ENCODE measurements at regions of chr7 and their contacts with region 1.

Region 1: DNA sequence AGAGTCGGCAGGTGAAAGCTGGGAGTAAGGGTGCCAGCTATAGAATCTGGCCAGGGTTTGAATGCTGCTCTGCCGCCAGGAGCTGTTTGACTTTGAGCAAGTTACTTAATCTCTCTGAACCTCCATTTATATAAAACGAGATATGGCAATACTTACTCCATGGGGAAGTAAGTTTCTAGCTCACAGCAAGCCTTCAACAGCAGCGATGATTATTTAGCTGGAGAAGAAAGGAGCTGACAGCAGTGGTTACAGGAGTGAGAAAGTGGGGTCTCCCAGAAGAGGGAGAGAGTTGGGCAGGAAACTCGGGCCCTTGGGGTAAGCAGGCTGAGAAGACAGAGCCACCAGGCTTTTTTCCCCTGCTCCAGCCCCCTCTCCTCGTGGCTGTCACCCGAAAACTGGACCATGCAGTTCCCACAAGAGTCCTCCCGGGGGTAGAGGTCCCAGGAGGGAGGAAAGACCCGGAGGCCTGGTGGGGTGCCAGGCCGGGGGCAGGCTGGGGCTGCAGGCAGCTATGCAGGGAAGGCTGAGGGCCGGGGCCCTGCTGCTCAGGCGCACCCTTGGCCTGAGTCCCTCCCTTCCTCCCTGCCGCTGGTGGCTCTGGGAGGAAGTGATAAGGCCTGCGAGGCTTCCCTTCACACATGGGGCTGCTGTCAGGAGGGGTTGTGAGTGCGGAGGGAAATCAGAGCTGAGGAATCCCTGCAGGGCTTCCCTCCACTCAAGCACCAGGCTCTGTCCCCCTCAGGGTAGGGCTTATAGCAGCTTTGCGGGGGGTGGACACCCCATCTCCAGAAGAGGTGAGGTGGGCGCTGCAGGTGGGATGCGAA is 3.5 kb downstream of the NOS3 start:
- DNase-seq: peak; percentile 51
- H3K4me3 Mint-ChIP-seq: peak overlapping the region; percentile 58
- H3K27ac Mint-ChIP-seq: peak overlapping the region; percentile 80
- H3K4me1 Mint-ChIP-seq: peaks cover 46% of the 10 kb centered on the region
- H3K27me3 Mint-ChIP-seq: no peaks in the 10 kb centered on the region

Region 2: DNA sequence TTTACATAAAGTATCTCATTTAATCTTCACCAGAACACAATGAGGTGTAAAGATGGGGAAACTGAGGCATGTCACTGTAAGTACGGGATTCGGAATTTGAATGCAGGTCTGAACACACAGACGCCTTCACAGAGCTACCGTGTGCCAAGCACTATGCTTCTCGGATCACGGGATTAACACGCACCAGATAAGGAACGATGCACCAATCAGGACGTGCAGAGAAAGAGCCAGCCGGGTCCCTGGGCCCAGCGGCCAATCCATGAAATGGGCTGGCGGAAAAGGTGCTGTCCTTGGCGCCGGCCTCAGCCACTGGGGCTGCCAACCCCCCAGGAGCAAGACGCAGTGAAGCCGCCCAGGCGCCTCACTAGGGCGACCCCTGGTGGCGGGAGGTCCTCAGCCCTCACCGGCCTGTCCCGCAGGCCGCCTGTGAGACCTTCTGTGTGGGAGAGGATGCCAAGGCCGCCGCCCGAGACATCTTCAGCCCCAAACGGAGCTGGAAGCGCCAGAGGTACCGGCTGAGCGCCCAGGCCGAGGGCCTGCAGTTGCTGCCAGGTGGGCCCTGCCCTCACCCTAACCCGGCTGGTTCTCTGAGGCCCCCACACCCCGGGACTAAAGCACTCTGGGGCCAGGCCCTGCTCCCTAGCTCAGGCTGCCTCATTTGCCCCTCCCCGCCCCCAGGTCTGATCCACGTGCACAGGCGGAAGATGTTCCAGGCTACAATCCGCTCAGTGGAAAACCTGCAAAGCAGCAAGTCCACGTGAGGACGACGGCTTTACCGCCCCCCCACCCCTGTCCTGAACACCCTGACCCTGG is 14.4 kb after region 1 on chr7:
- CTCF ChIA-PET with region 1: interaction called, 28 read pairs
- POLR2A ChIA-PET with region 1: no interaction called
- DNase-seq: peak; percentile 70
- H3K4me3 Mint-ChIP-seq: peak overlapping the region; percentile 74
- H3K27ac Mint-ChIP-seq: peak overlapping the region; percentile 93
- H3K4me1 Mint-ChIP-seq: peaks cover 64% of the 10 kb centered on the region
- H3K27me3 Mint-ChIP-seq: no peaks in the 10 kb centered on the region